Right ventricle myocardium inferior (tissue), 1 donor: ENCODE measurements at regions of chr1 and their contacts with region 1.

Region 1: GRCh38 chr1:245999696-246000637 is 507.1 kb downstream of the SMYD3 start:
- DNase-seq: no peak
- ATAC-seq: no peak

Region 2: GRCh38 chr1:245829826-245830225 is 170.1 kb before region 1 on chr1:
- intact Hi-C with region 1: loop called (anchors 2 kb)
- DNase-seq: no peak
- ATAC-seq: no peak

Region 3: DNA sequence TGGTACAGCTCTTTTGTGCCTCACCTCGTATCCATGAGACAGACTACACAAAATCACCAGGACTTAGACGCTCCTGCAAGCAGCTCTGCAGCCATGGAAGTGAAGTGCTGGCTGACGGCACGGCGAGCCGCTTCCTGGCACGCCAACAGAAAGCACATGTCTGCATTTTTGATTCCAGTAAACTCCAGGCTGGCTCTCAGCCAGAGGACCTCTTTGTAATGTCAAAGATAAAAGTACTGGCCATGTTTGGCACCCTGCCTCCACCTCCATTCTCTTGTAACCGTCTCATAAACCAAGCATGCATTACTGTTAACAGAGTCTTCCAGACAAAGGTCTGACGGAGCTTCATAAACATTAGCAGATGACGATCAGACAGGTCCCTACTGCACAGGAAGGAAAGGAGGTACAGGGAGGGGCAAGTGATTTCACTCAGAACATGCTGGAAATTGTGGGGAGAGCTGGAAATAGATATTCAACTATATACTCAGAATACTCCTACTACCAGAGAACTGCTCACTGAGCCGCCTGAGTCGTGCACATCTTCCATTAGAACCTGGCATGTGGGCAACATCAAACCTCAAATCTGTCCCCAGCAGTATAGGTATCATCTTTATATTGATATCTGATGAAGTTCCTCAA is 124.9 kb before region 1 on chr1:
- intact Hi-C with region 1: loop called (anchors 5 kb)
- DNase-seq: peak; percentile 79
- ATAC-seq: peak; percentile 84